Activated CD4-positive, alpha-beta T cell treated with anti-CD3 and anti-CD28 coated beads for 36 hours (primary cell): ENCODE measurements at regions of chr1 and their contacts with region 1.

Region 1: DNA sequence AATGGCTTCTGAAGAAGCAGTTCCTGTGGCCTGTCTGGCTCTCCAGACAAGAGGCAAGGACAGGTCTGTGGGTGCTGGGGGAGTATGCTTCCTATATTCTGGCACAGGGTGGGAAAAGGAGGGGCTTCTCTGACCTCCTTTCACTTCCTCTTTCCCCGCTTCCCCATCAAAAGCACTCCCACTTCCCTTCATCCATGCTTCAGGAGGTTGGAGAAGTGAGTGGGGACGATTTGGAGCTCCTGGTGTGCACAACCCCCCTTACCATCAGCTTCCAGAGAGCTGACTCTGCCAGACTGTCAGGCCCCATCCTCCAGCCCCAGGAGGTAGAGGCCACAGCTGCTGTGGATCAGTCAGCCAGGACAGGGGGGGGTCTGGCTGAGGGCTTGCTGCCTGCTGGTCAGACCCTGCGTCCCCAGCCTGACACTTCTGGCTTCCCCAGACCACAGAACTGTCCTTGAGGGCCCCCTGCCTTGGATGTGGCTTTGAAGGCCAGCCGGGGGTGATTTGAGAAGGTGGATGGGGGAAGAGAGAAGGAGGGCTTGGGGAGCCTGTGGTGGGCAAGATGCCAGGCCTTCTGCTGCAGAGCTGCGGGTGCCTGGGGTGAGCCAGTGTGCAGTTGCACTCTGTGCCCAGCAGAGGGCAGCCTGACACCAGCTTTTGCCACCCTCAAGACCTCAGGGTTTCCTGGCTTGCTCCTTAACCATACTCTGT is 21.5 kb upstream of the TMEM222 start:
- DNase-seq: peak; percentile 86
- ATAC-seq: peak; percentile 92
- H3K4me3 Mint-ChIP-seq: no peak overlapping the region
- H3K27ac Mint-ChIP-seq: no peak overlapping the region
- H3K4me1 Mint-ChIP-seq: no peaks in the 10 kb centered on the region
- H3K27me3 Mint-ChIP-seq: no peaks in the 10 kb centered on the region

Region 2: GRCh38 chr1:26949926-26950319 is 350.6 kb before region 1 on chr1:
- CTCF ChIA-PET with region 1: no interaction called
- POLR2A ChIA-PET with region 1: no interaction called
- intact Hi-C with region 1: no loop called
- DNase-seq: no peak
- ATAC-seq: no peak
- H3K4me3 Mint-ChIP-seq: no peak overlapping the region
- H3K27ac Mint-ChIP-seq: no peak overlapping the region
- H3K4me1 Mint-ChIP-seq: no peaks in the 10 kb centered on the region
- H3K27me3 Mint-ChIP-seq: no peaks in the 10 kb centered on the region

Region 3: GRCh38 chr1:27021354-27022031 is 279.0 kb before region 1 on chr1:
- CTCF ChIA-PET with region 1: no interaction called
- POLR2A ChIA-PET with region 1: no interaction called
- intact Hi-C with region 1: no loop called
- DNase-seq: no peak
- ATAC-seq: no peak
- H3K4me3 Mint-ChIP-seq: no peak overlapping the region
- H3K27ac Mint-ChIP-seq: no peak overlapping the region
- H3K4me1 Mint-ChIP-seq: no peaks in the 10 kb centered on the region
- H3K27me3 Mint-ChIP-seq: peaks cover 1% of the 10 kb centered on the region

Region 4: GRCh38 chr1:27097484-27097917 is 203.0 kb before region 1 on chr1:
- CTCF ChIA-PET with region 1: interaction called, 81 read pairs
- POLR2A ChIA-PET with region 1: no interaction called
- intact Hi-C with region 1: no loop called
- DNase-seq: peak; percentile 87
- ATAC-seq: peak; percentile 84
- H3K4me3 Mint-ChIP-seq: no peak overlapping the region
- H3K27ac Mint-ChIP-seq: no peak overlapping the region
- H3K4me1 Mint-ChIP-seq: peaks cover 9% of the 10 kb centered on the region
- H3K27me3 Mint-ChIP-seq: no peaks in the 10 kb centered on the region

Region 5: GRCh38 chr1:27332536-27333281 is 32.2 kb after region 1 on chr1:
- CTCF ChIA-PET with region 1: interaction called, 19 read pairs
- POLR2A ChIA-PET with region 1: no interaction called
- intact Hi-C with region 1: no loop called
- DNase-seq: peak; percentile 72
- ATAC-seq: peak; percentile 91
- H3K4me3 Mint-ChIP-seq: no peak overlapping the region
- H3K27ac Mint-ChIP-seq: no peak overlapping the region
- H3K4me1 Mint-ChIP-seq: peaks cover 27% of the 10 kb centered on the region
- H3K27me3 Mint-ChIP-seq: no peaks in the 10 kb centered on the region

Region 6: GRCh38 chr1:27357281-27358037 is 57.0 kb after region 1 on chr1:
- CTCF ChIA-PET with region 1: interaction called, 6 read pairs
- POLR2A ChIA-PET with region 1: no interaction called
- intact Hi-C with region 1: loop called in 1 of 2 experiments (anchors 1 kb)
- DNase-seq: peak; percentile 91
- ATAC-seq: peak; percentile 78
- H3K4me3 Mint-ChIP-seq: peak overlapping the region; percentile 64
- H3K27ac Mint-ChIP-seq: peak overlapping the region; percentile 73
- H3K4me1 Mint-ChIP-seq: peaks cover 40% of the 10 kb centered on the region
- H3K27me3 Mint-ChIP-seq: no peaks in the 10 kb centered on the region